Mammary epithelial cell (primary cell): ENCODE measurements at regions of chr20 and their contacts with region 1.

Region 1: DNA sequence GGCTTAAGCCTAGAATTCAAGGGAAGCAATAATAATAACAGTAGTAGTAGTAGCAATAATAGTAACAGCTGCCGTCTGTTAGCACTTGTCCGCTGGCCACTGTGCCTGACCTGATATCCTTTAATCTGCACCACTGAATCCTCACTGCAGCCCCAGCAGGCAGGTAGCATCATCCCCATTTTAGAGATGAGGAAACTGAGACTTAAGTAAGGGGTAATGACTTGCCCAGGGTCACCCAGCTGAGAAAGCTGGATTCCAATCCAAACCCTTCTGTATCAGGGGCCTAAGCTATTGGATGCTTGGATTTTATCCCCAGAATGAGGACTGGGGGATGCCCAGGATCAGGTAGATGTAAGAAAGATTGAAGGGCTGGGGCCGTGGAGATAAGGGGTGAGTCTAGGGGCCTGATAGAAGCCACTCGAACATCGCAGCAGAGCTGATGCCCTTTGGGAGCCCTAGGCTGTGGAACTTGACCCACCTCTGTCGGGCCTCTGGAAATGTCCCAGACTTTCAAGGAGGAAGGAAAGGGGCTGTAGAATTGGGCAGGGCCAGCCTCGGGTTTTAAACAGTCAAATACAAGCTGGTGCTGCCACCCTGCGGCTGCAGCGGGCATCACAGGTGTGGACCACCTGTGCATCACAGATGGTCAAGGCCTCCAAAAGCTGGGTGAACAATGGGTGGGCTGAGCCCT is 102.1 kb upstream of the MYL9 start:
- DNase-seq: peak; percentile 37
- H3K4me3 ChIP-seq: no peak overlapping the region
- H3K27ac ChIP-seq: no peak overlapping the region
- H3K4me1 ChIP-seq: no peaks in the 10 kb centered on the region
- H3K27me3 ChIP-seq: no peaks in the 10 kb centered on the region
- CTCF ChIP-seq: peak; percentile 86 to 87

Region 2: DNA sequence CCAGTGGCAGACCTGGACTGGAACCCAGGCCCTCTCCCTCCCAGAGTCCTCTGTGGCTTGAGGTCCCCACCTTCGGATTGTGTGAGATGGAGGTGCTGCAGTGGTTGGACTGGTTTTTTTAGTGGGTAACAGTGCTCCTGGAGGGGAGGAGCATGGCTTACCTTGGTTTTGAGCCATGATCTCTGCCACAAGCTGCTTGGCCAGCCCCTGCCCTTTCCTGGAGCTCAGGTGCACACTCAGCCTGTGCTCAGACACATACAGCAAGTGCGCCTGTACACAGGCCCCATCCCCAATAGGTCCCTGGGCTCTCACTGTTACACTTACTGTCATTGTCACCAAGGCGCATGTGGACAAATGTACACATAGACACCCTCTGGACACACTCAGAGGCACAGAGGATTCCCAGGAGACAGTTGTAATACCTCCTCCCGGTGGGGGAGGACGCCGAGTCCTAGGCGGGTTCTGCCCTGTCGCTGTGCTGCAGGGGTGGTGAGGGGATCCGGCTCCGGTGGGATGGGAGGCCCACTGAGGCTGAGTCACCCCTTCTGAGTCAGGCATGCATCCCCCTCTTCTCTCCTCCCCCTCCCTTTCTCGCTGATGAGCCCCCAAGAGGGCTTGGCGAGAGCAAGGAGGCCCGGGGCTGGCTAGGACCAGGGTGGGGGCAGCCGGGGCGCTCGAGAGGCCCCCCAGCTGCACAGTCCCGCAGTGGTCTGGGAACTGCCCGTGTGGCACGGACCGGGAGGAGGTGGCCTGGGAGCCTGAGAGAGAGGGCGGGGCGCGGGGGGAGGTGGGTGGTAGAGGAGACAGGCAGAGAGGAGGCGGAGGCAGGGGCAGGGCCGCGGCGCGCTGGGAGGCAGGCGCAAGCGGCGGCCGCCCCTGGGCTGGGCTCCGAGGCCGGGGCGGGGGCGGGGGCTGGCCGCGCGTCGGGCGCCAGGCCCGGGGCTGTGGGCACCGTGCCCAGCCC is 285.2 kb before region 1 on chr20:
- CTCF ChIA-PET with region 1: no interaction called
- dilution Hi-C with region 1: no loop called
- in situ Hi-C with region 1: no loop called
- intact Hi-C with region 1: loop called (anchors 5 kb)
- DNase-seq: peak; percentile 51
- H3K4me3 ChIP-seq: peak overlapping the region; percentile 11 to 56 (median 47)
- H3K27ac ChIP-seq: no peak overlapping the region
- H3K4me1 ChIP-seq: peaks cover 16% of the 10 kb centered on the region
- H3K27me3 ChIP-seq: no peaks in the 10 kb centered on the region
- CTCF ChIP-seq: no peak

Region 3: DNA sequence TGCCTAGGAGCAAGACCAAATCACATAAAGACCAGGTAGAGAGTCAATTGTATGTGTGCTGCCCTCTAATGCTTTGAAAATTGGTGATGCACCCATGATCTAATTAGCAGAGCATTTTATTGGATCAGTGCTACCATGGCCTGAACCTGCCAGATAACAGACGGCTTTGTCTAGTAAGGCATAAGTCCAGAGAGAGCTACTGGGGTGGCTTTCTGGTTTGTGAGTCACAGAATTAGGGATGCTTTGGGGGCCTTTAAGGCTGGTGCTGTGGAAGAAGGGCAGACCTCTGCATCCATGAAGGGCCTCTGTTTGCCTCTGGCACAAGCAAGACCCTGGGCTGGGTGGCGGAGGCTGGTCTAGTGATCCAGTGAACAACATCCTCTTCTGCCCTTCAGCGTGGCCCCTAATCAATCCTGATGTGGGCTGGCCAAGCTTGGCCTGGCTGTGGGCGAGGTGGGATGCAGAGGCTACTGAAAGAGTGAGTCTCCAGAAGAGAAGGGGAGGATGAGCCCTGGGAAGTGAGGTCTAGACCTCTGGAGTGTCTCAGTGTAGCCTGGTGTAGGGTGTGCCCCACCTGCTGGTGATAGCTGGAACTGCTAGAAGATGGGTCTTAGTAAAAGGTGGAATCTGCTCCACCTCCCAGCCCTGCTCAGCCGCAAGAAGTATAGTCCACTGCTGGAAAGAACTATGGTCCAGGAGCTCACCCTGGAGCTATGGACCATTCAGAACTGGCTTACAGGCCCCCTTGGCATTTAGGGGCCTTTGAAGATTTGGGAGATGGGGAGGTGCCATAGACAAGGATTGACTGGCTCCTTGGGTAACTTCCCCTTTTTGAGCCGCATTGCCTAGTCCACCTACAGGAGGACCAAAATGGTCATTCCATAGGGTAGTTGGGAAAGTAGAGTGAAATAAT is 239.6 kb before region 1 on chr20:
- CTCF ChIA-PET with region 1: interaction called, 3 read pairs
- dilution Hi-C with region 1: no loop called
- in situ Hi-C with region 1: loop called in 1 of 2 experiments (anchors 5 kb)
- intact Hi-C with region 1: loop called (anchors 1 kb)
- DNase-seq: peak; percentile 54
- H3K4me3 ChIP-seq: no peak overlapping the region
- H3K27ac ChIP-seq: no peak overlapping the region
- H3K4me1 ChIP-seq: no peaks in the 10 kb centered on the region
- H3K27me3 ChIP-seq: no peaks in the 10 kb centered on the region
- CTCF ChIP-seq: peak; percentile 92 to 97

Region 4: DNA sequence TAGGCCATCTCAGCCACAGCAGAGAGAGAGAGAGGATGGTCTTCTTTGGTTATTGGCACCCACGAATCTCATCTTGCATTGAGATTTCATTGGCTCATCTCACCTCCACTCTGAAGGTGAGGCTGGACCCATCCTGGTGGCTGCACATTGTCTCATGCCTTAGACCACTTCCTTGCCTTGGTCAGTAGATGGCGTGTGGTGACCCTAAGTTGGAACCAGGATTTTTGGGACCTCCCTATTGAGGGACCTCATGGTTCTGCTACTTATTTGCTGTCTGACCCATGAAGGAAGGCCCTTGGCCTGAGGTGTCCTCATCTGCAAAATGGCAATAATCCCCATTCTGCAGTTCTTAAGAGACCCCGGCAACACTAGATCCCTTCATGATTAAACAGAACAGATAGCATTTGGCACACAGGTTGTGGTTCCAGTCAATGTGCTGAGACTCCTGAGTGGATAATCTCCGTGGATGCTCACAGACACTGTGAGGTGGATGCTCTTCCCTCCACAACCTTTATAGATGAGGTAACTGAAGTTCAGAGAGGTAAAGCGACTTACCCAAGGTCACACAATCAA is 224.4 kb before region 1 on chr20:
- CTCF ChIA-PET with region 1: no interaction called
- dilution Hi-C with region 1: no loop called
- in situ Hi-C with region 1: loop called in 1 of 2 experiments (anchors 5 kb)
- intact Hi-C with region 1: loop called (anchors 1 kb)
- DNase-seq: peak; percentile 18
- H3K4me3 ChIP-seq: no peak overlapping the region
- H3K27ac ChIP-seq: no peak overlapping the region
- H3K4me1 ChIP-seq: no peaks in the 10 kb centered on the region
- H3K27me3 ChIP-seq: no peaks in the 10 kb centered on the region
- CTCF ChIP-seq: peak; percentile 72

Region 5: GRCh38 chr20:36273414-36274180 is 165.6 kb before region 1 on chr20:
- CTCF ChIA-PET with region 1: interaction called, 6 read pairs
- dilution Hi-C with region 1: no loop called
- in situ Hi-C with region 1: no loop called
- intact Hi-C with region 1: loop called (anchors 1 kb)
- DNase-seq: no peak
- H3K4me3 ChIP-seq: no peak overlapping the region
- H3K27ac ChIP-seq: no peak overlapping the region
- H3K4me1 ChIP-seq: no peaks in the 10 kb centered on the region
- H3K27me3 ChIP-seq: no peaks in the 10 kb centered on the region
- CTCF ChIP-seq: peak; percentile 37 to 47

Region 6: DNA sequence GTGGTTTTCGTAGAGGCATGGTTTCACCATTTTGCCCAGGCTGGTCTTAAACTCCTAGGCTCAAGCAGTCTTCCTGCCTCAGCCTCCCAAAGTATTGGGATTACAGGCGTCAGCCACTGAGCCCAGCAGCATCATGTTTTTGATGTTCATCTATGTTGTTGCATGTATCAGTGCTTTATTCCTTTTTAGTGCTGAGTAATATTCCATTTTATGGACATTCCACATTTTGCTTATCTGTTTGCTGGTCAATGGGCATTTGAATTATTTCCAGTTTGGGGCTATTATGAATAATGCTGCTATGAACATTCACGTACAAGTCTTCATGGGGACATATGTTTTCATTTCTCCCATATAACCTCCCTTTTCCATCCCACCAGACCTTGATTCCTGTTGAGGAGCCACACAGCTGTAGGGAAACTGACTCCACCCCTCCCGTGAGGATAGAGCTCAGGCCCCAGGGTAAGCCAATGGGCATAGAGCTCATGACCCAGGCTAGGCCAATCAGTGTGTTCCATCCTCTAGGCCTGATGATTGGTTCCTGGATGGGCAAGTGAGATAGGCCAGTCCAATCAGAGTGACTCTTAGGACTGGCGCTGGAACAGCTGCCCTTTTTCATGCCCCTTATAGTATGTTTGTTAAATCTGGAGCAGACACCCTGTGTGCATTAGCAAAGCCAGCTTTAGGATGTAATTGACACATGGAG is 83.6 kb before region 1 on chr20:
- CTCF ChIA-PET with region 1: no interaction called
- dilution Hi-C with region 1: loop called (anchors 5 kb)
- in situ Hi-C with region 1: no loop called
- intact Hi-C with region 1: no loop called
- DNase-seq: no peak
- H3K4me3 ChIP-seq: no peak overlapping the region
- H3K27ac ChIP-seq: no peak overlapping the region
- H3K4me1 ChIP-seq: no peaks in the 10 kb centered on the region
- H3K27me3 ChIP-seq: no peaks in the 10 kb centered on the region
- CTCF ChIP-seq: no peak

Region 7: GRCh38 chr20:36384022-36384619 is 55.1 kb before region 1 on chr20:
- CTCF ChIA-PET with region 1: no interaction called
- dilution Hi-C with region 1: no loop called
- in situ Hi-C with region 1: no loop called
- intact Hi-C with region 1: loop called (anchors 5 kb)
- DNase-seq: peak; percentile 30
- H3K4me3 ChIP-seq: no peak overlapping the region
- H3K27ac ChIP-seq: no peak overlapping the region
- H3K4me1 ChIP-seq: no peaks in the 10 kb centered on the region
- H3K27me3 ChIP-seq: no peaks in the 10 kb centered on the region
- CTCF ChIP-seq: peak in 1 of 2 donors; percentile 26